Cardiac septum (tissue), 1 donor: ENCODE measurements at regions of chr3 and their contacts with region 1.

Region 1: DNA sequence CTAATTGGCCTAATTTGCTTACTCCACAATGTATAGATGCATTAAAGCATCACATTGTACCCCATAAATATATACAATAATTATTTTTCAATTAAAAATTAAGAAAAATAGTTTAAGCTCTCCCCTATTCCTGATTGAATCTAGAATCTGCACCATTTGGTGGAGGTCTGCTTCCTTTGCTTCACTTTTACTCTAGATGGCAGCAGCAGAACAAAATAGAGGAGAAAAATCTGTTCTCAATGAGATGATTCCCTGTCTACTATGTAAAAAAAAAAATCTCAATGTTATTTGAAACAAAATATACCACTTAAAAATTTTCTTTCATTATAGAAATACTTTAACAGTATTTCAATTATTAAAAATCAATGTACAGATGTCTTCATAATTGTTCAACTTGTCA is 109.6 kb upstream of the FXR1 start:
- DNase-seq: no peak

Region 2: GRCh38 chr3:181176601-181177000 is 373.8 kb after region 1 on chr3:
- intact Hi-C with region 1: loop called (anchors 5 kb)
- DNase-seq: no peak